Right ventricle myocardium inferior (tissue), 1 donor: ENCODE measurements at regions of chr22 and their contacts with region 1.

Region 1: DNA sequence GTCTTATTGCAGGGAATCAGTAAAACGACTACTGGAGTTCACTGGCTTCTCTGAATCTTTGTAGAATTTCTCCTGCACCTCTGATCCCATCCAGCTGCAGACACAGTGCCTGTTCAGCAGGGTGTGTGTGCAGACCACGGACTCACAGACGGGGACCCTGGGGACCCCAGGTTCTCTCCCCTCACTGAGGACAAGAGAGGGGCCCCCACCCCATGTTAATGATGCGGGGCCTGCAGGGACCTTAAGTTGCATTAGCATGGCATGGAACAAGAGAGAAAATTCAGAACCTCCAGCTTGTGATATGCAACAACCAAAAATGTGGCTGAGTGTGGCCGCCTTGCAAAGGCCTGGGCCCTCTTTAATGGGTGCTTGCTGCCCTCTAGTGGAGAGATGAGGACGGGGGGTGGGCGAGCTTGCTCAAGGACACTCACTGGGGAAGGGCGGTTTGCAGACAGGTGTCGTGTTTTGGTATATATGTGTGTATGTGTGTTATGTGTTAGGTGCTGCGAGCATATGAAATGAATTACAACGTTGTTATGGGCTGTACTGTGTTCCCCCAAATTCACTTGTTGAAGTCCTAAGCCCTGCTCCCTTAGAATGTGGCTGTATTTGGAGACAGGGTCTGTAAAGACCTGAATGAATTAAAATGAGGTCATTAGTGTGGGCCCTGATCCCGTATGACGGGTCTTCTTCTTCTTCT is 84.4 kb upstream of the SEPTIN5 start:
- DNase-seq: peak; percentile 86
- ATAC-seq: peak; percentile 79

Region 2: DNA sequence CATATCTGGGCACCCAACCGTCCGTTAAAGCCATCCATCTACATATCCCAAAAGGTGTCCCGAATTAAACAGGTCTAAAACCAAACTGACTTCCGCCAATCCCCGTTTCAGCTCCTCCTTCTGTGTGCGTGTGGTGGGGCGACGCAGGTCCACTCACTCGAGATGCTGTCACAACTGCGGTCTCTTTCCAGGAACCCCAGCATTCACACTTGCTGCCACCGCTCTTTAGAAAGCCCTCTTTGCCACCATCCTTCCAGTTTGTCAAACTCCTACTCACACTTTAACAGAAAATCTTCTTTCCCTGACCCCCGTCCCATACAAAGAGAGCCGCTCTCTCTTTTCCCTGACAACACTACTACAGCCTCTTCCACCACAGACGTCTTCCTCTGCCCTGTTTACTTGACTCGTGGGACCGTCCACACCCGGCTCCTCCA is 485.9 kb before region 1 on chr22:
- intact Hi-C with region 1: loop called (anchors 2 kb)
- DNase-seq: no peak
- ATAC-seq: no peak

Region 3: DNA sequence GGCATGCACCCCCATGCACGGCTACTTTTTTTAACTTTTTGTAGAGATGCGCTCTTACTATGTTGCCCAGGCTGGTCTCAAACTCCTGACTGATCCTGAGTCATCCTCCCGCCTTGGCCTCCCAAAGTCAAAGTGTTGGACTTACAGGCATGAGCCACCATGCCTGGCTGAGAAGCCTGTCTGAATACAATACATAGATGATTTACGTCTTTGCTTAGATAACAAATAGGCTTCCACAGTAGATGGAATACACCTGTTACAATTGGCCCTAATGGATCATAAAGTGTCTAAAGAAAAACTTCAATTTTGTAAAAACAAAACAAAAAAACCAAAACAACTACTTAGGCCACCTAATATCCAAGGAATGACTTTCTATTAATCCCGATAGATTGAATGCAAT is 325.3 kb before region 1 on chr22:
- intact Hi-C with region 1: loop called (anchors 10 kb)
- DNase-seq: no peak
- ATAC-seq: no peak

Region 4: DNA sequence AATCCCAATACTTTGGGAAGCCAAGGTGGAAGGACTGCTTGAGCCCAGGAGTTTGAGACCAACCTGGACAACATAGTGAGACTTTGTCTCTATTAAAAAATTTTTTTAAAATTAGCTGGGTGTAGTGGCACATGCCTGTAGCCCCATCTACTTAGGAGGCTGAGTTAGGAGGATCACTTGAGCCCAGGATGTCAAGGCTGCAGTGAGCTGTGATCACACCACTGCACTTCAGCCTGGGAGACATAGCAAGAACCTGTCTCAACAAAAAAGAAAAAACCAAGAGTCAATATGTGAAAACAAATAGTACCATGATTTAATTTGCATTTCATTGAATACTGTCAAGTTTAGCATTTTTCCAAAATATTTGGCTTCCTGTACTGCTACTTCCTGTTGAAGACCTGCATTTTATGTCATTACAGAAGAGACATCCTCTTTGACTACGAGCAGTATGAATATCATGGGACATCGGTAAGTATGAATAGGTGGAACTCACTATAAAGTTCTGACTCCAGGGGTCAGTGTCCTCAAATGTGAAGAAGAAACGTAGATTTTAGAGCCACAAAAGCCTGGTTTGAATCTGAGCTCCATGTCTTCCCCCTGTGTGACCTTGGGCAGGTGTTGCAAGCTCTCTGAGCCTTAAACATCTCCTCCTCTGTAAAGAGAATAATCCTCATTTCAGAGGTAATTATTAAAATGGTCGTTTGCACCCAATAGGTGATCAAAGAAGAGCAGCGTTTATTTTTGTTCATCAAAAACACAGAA is 134.1 kb before region 1 on chr22:
- intact Hi-C with region 1: loop called (anchors 2 kb)
- DNase-seq: no peak
- ATAC-seq: no peak

Region 5: DNA sequence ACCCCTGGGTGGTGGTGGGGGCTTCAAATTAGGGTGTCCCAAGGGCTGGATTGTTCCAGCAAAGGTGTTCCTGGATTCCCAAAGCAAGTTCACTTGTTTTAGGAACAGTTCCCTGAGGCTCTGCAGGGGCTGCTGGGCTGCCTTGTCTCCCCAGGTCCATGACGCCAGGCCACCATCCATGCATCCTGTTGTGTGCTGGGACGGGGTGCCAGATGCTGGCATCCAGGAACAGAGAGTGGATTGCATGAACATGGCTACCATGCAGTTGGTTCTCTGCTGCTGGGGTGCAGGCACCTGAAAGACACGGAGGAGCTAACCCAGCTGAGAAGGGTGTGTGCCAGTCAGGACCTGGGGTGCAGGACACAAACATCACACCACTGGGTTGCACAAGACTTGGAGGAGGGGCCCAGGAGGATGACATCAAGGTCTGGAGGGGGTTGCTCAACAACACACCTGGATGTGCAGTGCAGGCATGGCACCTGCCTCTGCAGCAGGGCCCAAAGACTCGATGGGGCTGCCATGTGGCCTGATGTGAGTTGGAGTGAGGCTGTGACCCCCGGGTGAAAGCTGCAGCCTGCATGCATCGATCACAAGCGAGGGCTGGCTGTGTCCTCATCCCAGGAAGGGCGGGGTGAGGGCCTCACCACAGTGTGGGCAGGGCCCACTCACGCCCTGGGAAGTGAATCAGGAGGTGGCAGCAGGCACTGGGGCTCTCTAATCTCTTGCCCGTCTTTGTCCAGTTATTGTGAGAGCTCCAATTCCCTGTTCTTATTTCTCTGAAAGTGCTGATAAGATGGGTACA is 31.6 kb before region 1 on chr22:
- intact Hi-C with region 1: no loop called
- DNase-seq: no peak
- ATAC-seq: no peak

Region 6: GRCh38 chr22:19717691-19718455 is 88.0 kb after region 1 on chr22:
- intact Hi-C with region 1: loop called (anchors 1 kb)
- DNase-seq: peak; percentile 89
- ATAC-seq: peak; percentile 76